Activated CD8-positive, alpha-beta T cell treated with anti-CD3 and anti-CD28 coated beads, Interleukin-2, amount 10 ng/mL, durations not matched to agents 7 days and 5 days (primary cell): ENCODE measurements at regions of chr9 and their contacts with region 1.

Region 1: GRCh38 chr9:132901856-132902831 is 23.4 kb downstream of the SPACA9 start:
- DNase-seq: peak; percentile 89
- ATAC-seq: peak; percentile 93
- H3K4me3 Mint-ChIP-seq: no peak overlapping the region
- H3K27ac Mint-ChIP-seq: peak overlapping the region; percentile 44
- H3K4me1 Mint-ChIP-seq: peaks cover 18% of the 10 kb centered on the region
- H3K27me3 Mint-ChIP-seq: no peaks in the 10 kb centered on the region

Region 2: GRCh38 chr9:132849185-132849706 is 52.9 kb before region 1 on chr9:
- CTCF ChIA-PET with region 1: interaction called, 26 read pairs
- POLR2A ChIA-PET with region 1: no interaction called
- DNase-seq: peak; percentile 31
- ATAC-seq: no peak
- H3K4me3 Mint-ChIP-seq: peak overlapping the region; percentile 56
- H3K27ac Mint-ChIP-seq: peak overlapping the region; percentile 88
- H3K4me1 Mint-ChIP-seq: peaks cover 33% of the 10 kb centered on the region
- H3K27me3 Mint-ChIP-seq: peaks cover 3% of the 10 kb centered on the region

Region 3: DNA sequence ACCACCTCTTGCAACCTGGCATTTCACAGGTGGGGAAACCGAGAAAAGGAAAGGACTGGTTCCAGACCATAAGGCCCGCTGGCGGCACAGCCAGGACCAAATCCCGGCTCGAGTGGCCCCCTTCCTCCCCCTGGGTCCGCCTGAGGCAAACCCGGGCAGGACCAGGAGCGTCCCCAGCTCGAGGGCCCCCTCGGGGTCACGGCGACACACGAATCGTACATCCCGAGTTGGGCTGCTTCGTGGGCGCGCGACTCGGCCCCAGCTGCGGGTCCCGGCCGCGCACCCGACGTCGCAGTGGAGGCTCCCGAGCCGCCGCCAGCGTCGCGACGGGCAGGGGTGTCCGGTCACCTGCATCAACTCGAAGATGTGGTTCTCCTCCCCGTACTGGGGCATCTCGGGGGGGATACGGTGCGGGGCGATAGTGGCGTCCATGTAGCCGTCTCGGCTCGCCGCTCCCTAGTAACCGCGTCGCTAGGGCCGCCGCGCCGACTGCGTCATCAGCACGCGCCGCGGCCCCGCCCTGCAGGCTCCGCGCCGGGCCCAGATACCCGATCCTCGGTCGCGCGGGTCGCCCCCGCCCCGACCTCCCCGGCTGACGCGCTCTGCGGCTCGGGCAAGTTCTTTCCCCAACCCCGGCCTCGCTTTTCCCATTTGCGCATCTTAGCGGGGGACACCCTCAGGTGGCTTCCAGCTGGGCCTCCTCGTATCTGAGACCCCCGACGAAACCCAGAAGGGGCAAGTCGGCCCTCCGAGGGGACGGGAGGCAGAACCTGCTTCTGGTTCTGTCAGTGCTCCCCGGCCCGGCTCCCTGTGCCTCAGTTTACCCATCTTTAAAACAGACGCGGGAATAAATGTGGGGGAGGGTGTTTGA is 24.1 kb before region 1 on chr9 and contains the start of gene AK8:
- CTCF ChIA-PET with region 1: interaction called, 18 read pairs
- POLR2A ChIA-PET with region 1: interaction called, 15 read pairs
- DNase-seq: peak; percentile 78
- ATAC-seq: peak; percentile 82
- H3K4me3 Mint-ChIP-seq: peak within 1 kb of the TSS; percentile 80
- H3K27ac Mint-ChIP-seq: peak within 1 kb of the TSS; percentile 87
- H3K4me1 Mint-ChIP-seq: peaks cover 45% of the 10 kb centered on the region
- H3K27me3 Mint-ChIP-seq: peaks cover 5% of the 10 kb centered on the region
- total RNA-seq, gene AK8: 0.39 TPM in 1 of 2 experiments, not detected in the other

Region 4: DNA sequence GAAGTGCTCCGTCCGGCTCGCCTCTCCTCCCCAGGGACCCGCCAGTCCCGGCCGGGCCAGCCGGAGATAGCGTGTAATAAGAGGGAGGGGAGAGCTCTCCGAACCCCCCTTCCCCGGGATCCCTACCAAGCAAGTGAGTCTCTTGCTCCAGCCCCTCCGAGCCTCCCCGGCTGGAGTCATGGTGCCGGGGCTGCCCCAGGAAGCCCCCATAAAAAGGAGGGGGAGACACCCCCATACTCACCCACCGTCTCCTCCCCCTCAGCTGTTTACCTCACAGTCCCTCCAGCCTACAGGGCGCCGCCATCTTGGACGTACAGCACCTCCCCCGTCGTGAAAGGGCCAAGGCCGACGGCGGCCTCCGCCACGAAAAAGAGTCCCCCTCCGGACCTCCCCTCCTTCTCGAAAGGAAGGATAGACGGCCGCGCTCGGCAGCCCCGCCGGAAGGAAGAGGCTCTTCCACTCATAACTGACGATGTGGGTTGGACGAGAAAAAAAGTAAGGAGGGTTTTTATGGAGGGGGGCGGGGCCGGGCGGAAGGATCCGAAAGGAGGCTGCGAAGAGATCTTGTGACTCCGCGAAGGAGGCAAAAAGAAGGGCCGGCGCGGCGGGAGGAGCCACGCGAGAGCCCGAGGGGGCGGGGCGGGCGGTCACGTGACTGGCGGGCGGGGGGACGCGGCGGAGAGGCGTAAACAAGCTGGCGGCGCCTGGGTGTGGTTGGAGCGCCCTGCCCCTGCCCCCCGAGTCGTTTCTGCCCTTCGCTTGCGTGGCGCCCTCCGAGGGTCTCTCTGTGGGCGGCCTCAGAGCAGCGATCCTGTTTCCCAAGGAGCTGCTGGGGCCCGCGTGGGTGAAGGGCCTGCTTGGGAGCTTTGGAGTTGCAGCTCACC is 42.4 kb after region 1 on chr9 and contains the start of gene TSC1:
- CTCF ChIA-PET with region 1: interaction called, 21 read pairs
- POLR2A ChIA-PET with region 1: no interaction called
- DNase-seq: peak; percentile 98
- ATAC-seq: peak; percentile 92
- H3K4me3 Mint-ChIP-seq: peak within 1 kb of the TSS; percentile 84
- H3K27ac Mint-ChIP-seq: peak within 1 kb of the TSS; percentile 99
- H3K4me1 Mint-ChIP-seq: peaks cover 27% of the 10 kb centered on the region
- H3K27me3 Mint-ChIP-seq: no peaks in the 10 kb centered on the region
- total RNA-seq, gene TSC1: 26.1 to 26.6 TPM

Region 5: GRCh38 chr9:133074111-133074651 is 172.0 kb after region 1 on chr9:
- CTCF ChIA-PET with region 1: no interaction called
- POLR2A ChIA-PET with region 1: no interaction called
- DNase-seq: no peak
- ATAC-seq: no peak
- H3K4me3 Mint-ChIP-seq: no peak overlapping the region
- H3K27ac Mint-ChIP-seq: no peak overlapping the region
- H3K4me1 Mint-ChIP-seq: no peaks in the 10 kb centered on the region
- H3K27me3 Mint-ChIP-seq: peaks cover 8% of the 10 kb centered on the region